Activated CD4-positive, alpha-beta T cell treated with anti-CD3 and anti-CD28 coated beads, Interleukin-2, amount 10 ng/mL, durations not matched to agents 24 days and 14 days (primary cell): ENCODE measurements at regions of chr14 and their contacts with region 1.

Region 1: GRCh38 chr14:92039719-92040430 is at the start of gene TRIP11:
- DNase-seq: peak; percentile 99
- H3K4me3 Mint-ChIP-seq: peak within 1 kb of the TSS; percentile 93
- H3K27ac Mint-ChIP-seq: peak within 1 kb of the TSS; percentile 98
- H3K4me1 Mint-ChIP-seq: peaks cover 31% of the 10 kb centered on the region
- H3K27me3 Mint-ChIP-seq: no peaks in the 10 kb centered on the region
- total RNA-seq, gene TRIP11: 38.6 and 42.0 TPM in 2 replicates

Region 2: DNA sequence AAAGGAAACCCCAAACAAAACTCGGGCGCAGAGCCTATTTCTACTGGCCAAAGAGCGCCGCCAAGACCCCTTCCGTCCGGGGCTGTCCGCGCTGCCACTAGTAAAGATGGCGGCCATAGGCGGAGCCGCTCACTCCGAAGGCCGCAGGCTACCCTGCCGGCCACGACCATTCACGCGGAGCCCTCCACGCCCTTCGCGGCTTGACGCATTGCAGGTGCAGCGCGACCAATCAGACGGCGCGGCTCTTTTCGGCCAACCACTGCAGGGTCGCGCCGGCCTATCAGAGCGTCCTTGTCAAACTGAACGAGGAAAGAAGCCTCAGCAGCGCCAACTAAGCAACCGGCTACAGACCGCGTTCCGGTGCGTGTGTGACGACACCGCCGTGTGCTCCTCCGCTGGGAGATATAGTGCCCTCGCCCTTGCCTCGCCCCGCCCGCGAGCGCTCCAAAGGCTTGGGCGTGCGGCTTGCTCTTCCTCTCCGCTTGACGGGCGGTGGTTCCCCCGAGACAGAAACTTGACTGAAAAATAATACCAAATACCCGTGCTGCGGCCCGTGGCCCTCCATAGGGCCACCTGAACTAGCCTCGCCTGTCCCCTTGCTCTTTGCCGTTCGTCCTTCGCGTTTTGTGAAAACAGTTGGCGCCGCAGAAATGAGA is 1656.7 kb before region 1 on chr14:
- intact Hi-C with region 1: loop called (anchors 5 kb)
- DNase-seq: peak; percentile 99
- H3K4me3 Mint-ChIP-seq: no peak overlapping the region
- H3K27ac Mint-ChIP-seq: no peak overlapping the region
- H3K4me1 Mint-ChIP-seq: peaks cover 6% of the 10 kb centered on the region
- H3K27me3 Mint-ChIP-seq: no peaks in the 10 kb centered on the region

Region 3: DNA sequence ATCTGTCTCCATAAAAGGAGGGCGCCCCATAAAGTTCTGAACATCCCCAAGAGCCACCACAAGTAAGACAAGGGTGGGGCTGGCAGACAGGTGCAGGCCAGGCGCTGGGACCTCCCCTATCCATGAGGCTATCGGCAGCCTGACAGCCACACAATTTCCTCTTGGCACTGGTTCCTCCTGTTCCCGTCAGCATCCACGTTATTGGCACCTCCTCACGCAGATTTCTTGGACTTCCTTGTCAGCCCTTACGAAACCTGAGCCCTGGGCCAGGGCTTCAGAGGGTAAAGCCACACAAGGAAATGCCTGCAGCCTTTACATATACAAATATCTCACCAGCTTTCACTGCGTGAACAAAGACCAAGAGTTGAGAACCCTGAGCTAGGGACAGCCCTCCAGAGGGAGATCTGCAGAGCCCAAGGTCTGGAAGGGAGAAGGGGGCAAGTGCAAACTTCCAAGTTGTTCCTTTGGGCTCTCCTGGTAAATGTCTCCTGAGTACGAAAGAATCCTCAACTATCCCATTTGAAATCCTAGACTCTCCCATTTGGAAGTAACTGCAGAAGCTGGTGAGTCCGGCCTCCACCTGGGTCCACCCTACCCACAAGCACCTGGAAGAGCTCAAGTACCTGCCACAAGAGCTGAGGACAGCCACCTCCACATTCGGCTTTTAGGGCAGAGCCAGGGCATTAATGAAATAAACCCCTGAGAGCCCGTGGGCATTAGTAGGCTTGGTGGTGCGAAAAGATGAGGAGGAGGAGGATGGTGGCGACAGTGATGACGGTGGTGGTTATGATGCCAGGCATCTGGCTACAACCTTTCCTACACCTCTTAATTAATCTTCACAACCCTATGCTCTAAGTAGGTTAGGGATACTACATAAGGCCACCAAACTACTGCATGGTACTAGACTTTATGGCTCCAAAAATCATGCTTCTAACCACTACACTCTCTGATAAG is 167.1 kb before region 1 on chr14:
- intact Hi-C with region 1: loop called (anchors 5 kb)
- DNase-seq: peak; percentile 82
- H3K4me3 Mint-ChIP-seq: peak overlapping the region; percentile 89
- H3K27ac Mint-ChIP-seq: peak overlapping the region; percentile 91
- H3K4me1 Mint-ChIP-seq: peaks cover 90% of the 10 kb centered on the region
- H3K27me3 Mint-ChIP-seq: no peaks in the 10 kb centered on the region

Region 4: DNA sequence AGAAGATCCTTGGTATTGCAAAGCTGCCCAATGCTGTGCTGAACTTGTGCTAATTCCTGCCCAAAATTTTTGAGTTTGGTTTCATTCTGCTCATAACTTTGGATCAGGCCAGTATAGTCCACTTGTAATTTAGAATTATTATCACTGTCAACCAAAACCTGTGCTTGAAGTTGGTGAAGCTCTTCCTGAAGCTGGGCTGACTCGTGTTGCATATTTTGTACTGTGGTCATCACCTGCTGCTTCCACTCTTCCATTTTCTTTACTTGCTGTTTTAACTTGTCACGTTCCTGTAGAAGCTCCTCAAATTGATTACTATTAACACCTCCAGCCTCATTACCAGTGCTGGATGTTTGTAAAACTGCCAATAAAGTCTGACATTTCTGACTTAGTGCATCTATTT is 35.8 kb before region 1 on chr14:
- intact Hi-C with region 1: loop called (anchors 5 kb)
- DNase-seq: no peak
- H3K4me3 Mint-ChIP-seq: no peak overlapping the region
- H3K27ac Mint-ChIP-seq: no peak overlapping the region
- H3K4me1 Mint-ChIP-seq: peaks cover 23% of the 10 kb centered on the region
- H3K27me3 Mint-ChIP-seq: no peaks in the 10 kb centered on the region

Region 5: DNA sequence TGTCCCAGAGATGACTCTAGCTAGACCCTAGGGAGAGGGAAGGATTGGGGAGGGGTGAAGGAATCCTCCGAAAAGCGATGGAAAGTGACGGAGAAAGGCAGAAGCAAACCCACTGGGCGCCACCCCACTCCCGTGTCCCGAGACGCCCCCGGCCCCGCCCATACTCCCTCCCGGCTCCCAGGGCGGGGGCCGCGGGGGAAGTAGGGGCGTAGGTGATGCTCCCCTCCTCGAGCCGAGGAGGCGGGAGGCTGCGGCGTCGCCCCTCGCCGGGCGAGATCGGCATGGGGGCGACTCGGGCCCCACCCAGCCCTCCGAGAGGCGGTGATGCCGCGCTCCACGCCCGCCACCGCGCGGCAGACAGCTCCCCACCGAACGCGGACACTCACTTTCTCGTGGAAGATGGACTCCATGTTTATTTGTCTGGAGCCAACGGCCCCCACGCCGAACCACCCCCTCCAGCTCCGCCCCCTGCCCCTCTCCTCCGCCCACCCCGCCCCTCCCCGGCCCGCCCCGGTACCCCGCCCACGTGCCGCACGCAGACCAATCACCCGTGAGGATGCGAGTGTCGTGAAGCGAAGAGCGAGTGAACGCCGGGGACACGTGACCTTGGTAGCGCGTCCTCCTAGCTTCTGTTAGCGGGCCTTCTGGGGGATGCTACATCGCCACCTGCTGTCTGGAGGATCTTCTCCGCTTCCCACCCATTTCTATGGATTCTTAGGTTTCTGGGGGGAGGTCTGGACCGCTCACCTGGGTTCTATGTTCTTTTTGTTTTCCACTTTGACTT is 66.5 kb after region 1 on chr14 and contains the start of gene ATXN3:
- intact Hi-C with region 1: loop called (anchors 2 kb)
- DNase-seq: peak; percentile 98
- H3K4me3 Mint-ChIP-seq: peak within 1 kb of the TSS; percentile 89
- H3K27ac Mint-ChIP-seq: peak within 1 kb of the TSS; percentile 89
- H3K4me1 Mint-ChIP-seq: peaks cover 27% of the 10 kb centered on the region
- H3K27me3 Mint-ChIP-seq: no peaks in the 10 kb centered on the region
- total RNA-seq, gene ATXN3: 23.7 and 25.2 TPM in 2 replicates

Region 6: GRCh38 chr14:92121670-92122350 is 81.9 kb after region 1 on chr14 and contains the starts of genes CPSF2 and NDUFB1:
- intact Hi-C with region 1: loop called (anchors 5 kb)
- DNase-seq: peak; percentile 96
- H3K4me3 Mint-ChIP-seq: peak within 1 kb of the TSS; percentile 98
- H3K27ac Mint-ChIP-seq: peak within 1 kb of the TSS; percentile 100
- H3K4me1 Mint-ChIP-seq: peaks cover 31% of the 10 kb centered on the region
- H3K27me3 Mint-ChIP-seq: no peaks in the 10 kb centered on the region
- total RNA-seq, gene CPSF2: 111 and 120 TPM in 2 replicates
- total RNA-seq, gene NDUFB1: 76.1 and 77.9 TPM in 2 replicates